ENCODE measurements at regions of chr15 and their contacts with region 1.

Region 1: DNA sequence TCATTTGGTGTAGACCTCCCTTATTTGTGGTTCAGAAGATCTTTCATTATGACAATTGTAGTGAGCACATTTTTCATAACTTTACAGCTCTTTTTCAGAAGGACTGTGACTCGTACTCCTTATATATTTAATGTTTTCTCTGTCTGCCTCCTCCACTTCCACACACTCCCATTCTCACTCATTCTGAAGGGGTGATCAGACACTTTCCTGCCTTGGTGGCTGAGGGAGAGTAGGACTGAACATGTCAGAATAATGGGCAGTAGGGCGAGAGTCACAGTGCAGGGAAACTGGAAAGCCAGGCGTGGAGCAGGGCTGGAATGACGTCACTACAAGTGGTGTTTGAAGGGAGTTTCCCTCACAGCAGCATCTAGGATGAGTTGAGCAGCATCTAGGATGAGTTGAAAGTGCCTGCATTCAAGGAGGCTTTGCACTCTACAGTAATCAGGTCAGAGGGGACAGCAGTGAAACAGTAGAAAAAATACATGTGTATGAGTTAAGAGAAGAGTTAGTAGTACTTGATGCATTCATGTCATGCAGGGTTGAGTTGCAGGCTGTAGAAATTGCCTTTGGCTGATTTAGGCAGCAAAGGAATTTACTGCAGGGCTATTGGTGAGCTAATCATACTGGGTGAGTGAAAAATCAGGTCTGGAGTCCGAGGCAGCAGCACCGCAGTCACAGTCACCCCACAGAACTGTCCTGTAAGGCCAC is 36.3 kb upstream of the FBXL22 start:
- DNase-seq: no peak
- ATAC-seq: peak; percentile 38; the same call in 1 of the 2 replicates
- H3K4me3 ChIP-seq: no peak overlapping the region
- H3K27ac ChIP-seq: no peak overlapping the region
- H3K4me1 ChIP-seq: no peaks in the 10 kb centered on the region
- H3K27me3 ChIP-seq: no peaks in the 10 kb centered on the region
- CTCF ChIP-seq: no peak

Region 2: DNA sequence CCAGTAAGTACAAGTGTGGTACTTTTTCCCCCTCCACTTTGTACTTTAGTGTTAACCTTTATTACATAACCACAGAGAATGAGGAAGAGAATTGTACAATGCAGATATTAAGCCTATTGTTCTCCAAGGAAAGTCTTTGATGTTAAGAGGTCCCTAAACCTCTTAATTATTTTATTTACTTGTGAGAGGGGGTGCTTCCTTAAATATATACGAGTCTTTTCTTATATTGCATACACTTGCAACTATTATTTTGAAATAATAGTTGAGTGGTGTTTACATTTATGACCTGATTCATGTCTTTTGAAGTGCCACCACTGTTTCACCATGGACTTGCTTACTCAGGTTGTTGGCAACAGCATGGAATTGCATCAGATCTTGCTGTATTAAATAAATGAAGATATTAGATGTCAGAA is 46.4 kb before region 1 on chr15:
- CTCF ChIA-PET with region 1: no interaction called
- POLR2A ChIA-PET with region 1: interaction called, 13 read pairs
- in situ Hi-C with region 1: no loop called
- intact Hi-C with region 1: no loop called
- DNase-seq: peak; percentile 55
- ATAC-seq: no peak
- H3K4me3 ChIP-seq: no peak overlapping the region
- H3K27ac ChIP-seq: peak overlapping the region; percentile 81
- H3K4me1 ChIP-seq: peaks cover 85% of the 10 kb centered on the region
- H3K27me3 ChIP-seq: no peaks in the 10 kb centered on the region
- CTCF ChIP-seq: no peak

Region 3: DNA sequence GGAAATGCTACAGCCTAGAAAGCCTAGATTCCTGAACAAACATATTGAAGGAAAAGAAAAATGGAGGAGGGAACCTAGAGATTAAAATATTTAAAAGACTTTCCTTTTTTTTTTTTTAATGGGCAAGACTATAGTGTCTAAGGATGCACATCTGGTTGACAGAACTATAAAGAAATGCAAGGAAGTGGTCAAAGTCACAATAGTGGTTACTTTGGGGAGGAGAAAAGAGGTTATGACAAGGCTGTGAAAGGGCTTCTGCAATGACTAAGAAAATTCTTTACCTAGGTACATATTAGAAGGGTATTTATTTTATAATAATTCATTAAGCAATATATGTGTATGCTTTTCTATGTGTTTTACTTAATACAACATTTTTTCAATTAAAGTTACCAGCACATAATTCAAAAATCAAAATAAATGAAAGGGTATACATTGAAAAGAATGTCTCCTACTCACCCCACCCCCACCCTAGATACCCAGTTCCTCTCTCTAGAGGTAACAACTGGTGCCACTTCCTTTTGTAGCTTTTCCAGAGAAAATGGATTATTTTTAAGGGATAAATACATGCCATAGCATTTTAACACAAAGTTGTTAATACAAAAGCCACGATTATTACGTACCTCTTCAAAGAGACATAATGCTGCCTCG is 202.7 kb after region 1 on chr15:
- CTCF ChIA-PET with region 1: no interaction called
- POLR2A ChIA-PET with region 1: no interaction called
- in situ Hi-C with region 1: no loop called
- intact Hi-C with region 1: no loop called
- DNase-seq: no peak
- ATAC-seq: no peak
- H3K4me3 ChIP-seq: no peak overlapping the region
- H3K27ac ChIP-seq: no peak overlapping the region
- H3K4me1 ChIP-seq: no peaks in the 10 kb centered on the region
- H3K27me3 ChIP-seq: no peaks in the 10 kb centered on the region
- CTCF ChIP-seq: no peak

Region 4: GRCh38 chr15:63805993-63806980 is 245.4 kb after region 1 on chr15:
- CTCF ChIA-PET with region 1: no interaction called
- POLR2A ChIA-PET with region 1: no interaction called
- in situ Hi-C with region 1: no loop called
- intact Hi-C with region 1: no loop called
- DNase-seq: no peak
- ATAC-seq: no peak
- H3K4me3 ChIP-seq: no peak overlapping the region
- H3K27ac ChIP-seq: no peak overlapping the region
- H3K4me1 ChIP-seq: no peaks in the 10 kb centered on the region
- H3K27me3 ChIP-seq: no peaks in the 10 kb centered on the region
- CTCF ChIP-seq: no peak

Region 5: DNA sequence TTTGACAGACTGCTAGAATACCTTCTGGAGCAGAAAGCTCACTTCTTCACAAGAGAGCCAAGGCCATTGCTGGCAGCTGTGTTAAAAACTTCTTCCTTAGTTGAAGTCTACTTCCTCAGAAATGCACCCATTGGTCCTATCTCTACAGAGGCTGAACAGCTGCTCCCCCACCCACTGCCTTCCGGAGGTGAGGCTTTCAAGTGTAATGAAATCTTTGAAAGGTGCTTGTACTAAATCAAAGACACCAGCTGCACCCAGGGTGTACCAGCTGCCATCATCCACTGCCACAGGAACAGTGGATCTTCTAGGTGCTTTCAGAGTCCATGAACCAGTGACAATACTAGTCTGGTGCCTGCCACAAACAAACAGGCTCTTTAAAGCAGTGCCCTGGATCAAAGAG is 299.3 kb after region 1 on chr15:
- CTCF ChIA-PET with region 1: no interaction called
- POLR2A ChIA-PET with region 1: no interaction called
- in situ Hi-C with region 1: no loop called
- intact Hi-C with region 1: no loop called
- DNase-seq: no peak
- ATAC-seq: no peak
- H3K4me3 ChIP-seq: no peak overlapping the region
- H3K27ac ChIP-seq: no peak overlapping the region
- H3K4me1 ChIP-seq: no peaks in the 10 kb centered on the region
- H3K27me3 ChIP-seq: no peaks in the 10 kb centered on the region
- CTCF ChIP-seq: no peak

Region 6: DNA sequence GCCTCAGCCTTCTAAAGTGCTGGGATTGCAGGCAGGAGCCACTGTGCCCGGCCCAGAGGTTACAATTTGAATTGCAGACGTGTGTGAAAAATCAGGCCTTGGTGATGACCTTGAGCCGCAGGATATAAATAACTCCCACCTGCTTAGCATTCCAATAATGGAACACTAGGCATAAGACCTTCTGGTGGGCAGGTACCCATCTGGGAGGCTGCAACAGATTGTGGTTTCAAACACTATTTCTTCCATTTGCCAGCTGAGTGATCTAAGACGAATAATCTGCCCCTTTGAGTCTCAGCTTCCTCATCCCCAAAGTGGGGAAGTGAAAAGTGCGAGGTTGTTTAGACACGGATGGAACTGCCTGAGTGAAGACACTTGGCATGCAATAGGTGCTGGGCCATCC is 320.5 kb after region 1 on chr15:
- CTCF ChIA-PET with region 1: no interaction called
- POLR2A ChIA-PET with region 1: no interaction called
- in situ Hi-C with region 1: no loop called
- intact Hi-C with region 1: no loop called
- DNase-seq: no peak
- ATAC-seq: no peak
- H3K4me3 ChIP-seq: no peak overlapping the region
- H3K27ac ChIP-seq: no peak overlapping the region
- H3K4me1 ChIP-seq: no peaks in the 10 kb centered on the region
- H3K27me3 ChIP-seq: no peaks in the 10 kb centered on the region
- CTCF ChIP-seq: no peak

Region 7: DNA sequence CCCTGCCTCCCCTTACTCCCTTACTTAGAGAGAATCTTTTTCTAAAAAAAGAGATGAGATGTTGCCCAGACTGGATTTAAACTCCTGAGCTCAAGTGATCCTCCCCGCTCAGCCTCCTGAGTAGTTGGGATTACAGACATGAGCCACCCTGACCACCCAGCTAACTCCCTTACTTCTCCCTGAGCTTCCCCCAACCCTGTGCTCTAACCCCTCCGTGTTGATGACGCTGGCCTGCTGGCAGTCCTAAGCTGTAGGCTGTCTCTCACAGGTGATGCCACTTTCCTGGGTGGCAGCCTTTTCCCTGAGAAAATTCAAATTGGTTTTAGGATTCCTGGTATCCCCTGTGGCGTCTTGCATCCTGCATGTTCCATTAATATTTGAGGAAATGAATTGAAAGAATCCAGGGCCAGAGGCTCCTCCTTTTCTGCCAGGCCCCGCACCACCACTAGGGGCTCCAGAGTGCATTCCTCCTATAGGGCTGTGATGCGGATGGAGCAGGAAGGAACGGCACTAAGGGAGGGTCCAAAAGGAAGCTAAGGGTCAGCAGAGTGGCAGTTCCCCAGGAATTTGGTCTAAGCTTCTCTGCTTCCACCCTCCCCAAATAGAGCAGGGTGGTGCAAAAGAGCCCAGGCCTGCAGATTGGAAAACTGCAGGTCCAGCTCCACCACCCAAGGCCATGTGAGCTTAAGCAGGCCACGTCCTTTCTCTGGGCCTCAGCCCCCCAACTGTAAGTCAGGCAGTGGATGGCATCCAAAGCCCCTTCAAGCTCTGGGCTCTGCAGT is 384.3 kb after region 1 on chr15:
- CTCF ChIA-PET with region 1: no interaction called
- POLR2A ChIA-PET with region 1: interaction called, 14 read pairs
- in situ Hi-C with region 1: no loop called
- intact Hi-C with region 1: no loop called
- DNase-seq: peak; percentile 27
- ATAC-seq: peak; percentile 91
- H3K4me3 ChIP-seq: no peak overlapping the region
- H3K27ac ChIP-seq: no peak overlapping the region
- H3K4me1 ChIP-seq: no peaks in the 10 kb centered on the region
- H3K27me3 ChIP-seq: no peaks in the 10 kb centered on the region
- CTCF ChIP-seq: peak; percentile 97